Right ventricle myocardium superior (tissue), 1 donor: ENCODE measurements at regions of chr18 and their contacts with region 1.

Region 1: GRCh38 chr18:63518178-63519012 is 23.8 kb upstream of the SERPINB12 start:
- DNase-seq: no peak
- ATAC-seq: peak; percentile 89

Region 2: GRCh38 chr18:63848159-63848558 is 329.8 kb after region 1 on chr18:
- intact Hi-C with region 1: loop called (anchors 5 kb)
- DNase-seq: no peak
- ATAC-seq: no peak

Region 3: DNA sequence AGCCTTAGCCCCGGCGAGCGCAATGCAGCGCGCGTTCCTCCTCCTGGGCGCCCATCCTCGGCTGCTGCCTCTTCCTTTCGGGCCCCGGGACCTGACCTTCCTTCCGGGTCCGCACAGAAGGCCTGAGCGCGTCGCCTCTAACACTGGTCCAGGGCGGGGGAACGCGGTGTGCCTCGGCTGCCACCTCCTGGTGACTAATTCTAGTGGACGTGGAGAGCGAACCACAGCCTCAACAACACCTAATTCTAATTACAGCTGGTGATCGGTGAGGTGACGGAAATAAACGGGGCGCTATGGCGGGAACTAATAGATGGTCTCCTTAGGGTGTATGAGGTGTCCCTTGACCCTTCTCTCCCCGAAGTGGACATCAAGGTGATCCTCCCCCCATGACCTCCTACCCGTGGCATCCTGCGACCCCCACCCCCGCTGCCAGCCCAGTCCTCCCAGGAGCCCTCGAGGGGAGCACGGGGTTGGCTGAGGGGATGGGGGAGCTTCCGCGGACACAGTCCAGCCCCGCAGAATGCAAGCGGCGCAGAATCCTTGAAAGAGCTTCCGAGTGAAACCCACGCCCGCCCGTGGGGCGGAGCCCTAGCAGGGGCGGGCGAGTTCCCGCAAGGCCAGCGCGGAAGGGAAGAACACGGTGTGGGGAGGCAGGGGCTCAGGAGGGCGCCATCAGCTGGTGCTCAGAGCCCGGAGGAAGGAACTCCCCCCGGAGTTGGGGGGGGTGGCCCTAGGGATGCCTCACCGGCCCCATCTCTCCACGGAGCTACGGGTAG is 417.9 kb after region 1 on chr18:
- intact Hi-C with region 1: loop called (anchors 10 kb)
- DNase-seq: peak; percentile 92
- ATAC-seq: peak; percentile 100